Natural killer cell (primary cell): ENCODE measurements at regions of chr7 and their contacts with region 1.

Region 1: DNA sequence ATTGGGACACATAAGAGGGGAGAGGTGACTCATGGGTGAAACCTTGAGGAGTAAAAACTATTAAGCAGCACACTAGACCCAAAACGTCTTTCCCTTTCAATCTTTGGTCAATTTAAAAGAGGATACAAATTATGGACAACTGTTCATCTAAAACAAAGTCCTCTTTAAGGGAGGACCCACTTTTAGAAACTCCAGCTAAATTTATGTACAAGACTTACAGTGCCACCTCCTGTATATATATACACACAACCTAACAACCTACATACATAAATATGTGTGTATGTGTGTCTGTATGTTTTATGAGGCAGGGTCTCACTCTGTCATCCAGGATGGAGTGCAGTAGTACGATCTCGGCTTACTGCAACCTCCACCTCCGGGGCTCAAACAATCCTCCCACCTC is 18.1 kb upstream of the ZC3HAV1 start:
- DNase-seq: peak in 1 of 2 donors; percentile 48
- ATAC-seq: peak in 2 of 3 donors; percentile 55 to 61
- H3K4me3 ChIP-seq: no peak overlapping the region
- H3K4me3 Mint-ChIP-seq: no peak overlapping the region
- H3K27ac ChIP-seq: no peak overlapping the region
- H3K27ac Mint-ChIP-seq: no peak overlapping the region
- H3K4me1 ChIP-seq: peaks cover 6% of the 10 kb centered on the region
- H3K4me1 Mint-ChIP-seq: no peaks in the 10 kb centered on the region
- H3K27me3 ChIP-seq: no peaks in the 10 kb centered on the region
- H3K27me3 Mint-ChIP-seq: peaks cover 3 to 7% of the 10 kb centered on the region in 2 donors
- CTCF ChIP-seq: peak; percentile 58

Region 2: GRCh38 chr7:138785587-138786437 is 341.8 kb before region 1 on chr7:
- intact Hi-C with region 1: no loop called
- DNase-seq: no peak
- ATAC-seq: no peak
- H3K4me3 ChIP-seq: no peak overlapping the region
- H3K4me3 Mint-ChIP-seq: no peak overlapping the region
- H3K27ac ChIP-seq: no peak overlapping the region
- H3K27ac Mint-ChIP-seq: no peak overlapping the region
- H3K4me1 ChIP-seq: no peaks in the 10 kb centered on the region
- H3K4me1 Mint-ChIP-seq: no peaks in the 10 kb centered on the region
- H3K27me3 ChIP-seq: no peaks in the 10 kb centered on the region
- H3K27me3 Mint-ChIP-seq: peaks cover 9 to 11% of the 10 kb centered on the region in 2 donors
- CTCF ChIP-seq: no peak

Region 3: DNA sequence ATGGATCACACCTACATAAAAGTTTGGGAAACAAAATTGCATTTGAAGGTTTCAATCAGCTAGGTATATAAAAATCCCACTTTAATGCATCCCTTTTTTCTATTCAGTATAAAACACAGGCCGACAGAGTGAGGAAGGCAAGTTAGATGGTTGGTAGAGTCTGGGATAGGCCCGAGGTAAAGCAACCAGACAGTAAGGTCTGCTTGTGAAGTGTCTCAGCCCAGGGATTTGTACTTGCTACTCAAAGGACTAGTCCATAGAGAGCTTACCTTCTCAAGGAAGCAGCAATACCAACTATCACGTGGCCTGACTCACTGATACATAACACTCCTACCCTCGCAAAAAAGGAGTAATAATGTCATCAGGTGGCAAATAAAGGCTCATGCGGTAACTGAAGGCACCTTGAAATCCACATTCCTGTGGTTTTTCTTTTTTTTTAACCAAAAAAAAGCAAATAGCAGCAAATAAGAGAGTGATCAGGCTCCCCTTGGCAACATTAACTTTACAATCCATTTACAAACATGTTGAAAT is 273.5 kb before region 1 on chr7:
- intact Hi-C with region 1: no loop called
- DNase-seq: no peak
- ATAC-seq: no peak
- H3K4me3 ChIP-seq: no peak overlapping the region
- H3K4me3 Mint-ChIP-seq: no peak overlapping the region
- H3K27ac ChIP-seq: no peak overlapping the region
- H3K27ac Mint-ChIP-seq: no peak overlapping the region
- H3K4me1 ChIP-seq: no peaks in the 10 kb centered on the region
- H3K4me1 Mint-ChIP-seq: no peaks in the 10 kb centered on the region
- H3K27me3 ChIP-seq: no peaks in the 10 kb centered on the region
- H3K27me3 Mint-ChIP-seq: peaks cover 6 to 20% of the 10 kb centered on the region in 2 donors
- CTCF ChIP-seq: no peak

Region 4: DNA sequence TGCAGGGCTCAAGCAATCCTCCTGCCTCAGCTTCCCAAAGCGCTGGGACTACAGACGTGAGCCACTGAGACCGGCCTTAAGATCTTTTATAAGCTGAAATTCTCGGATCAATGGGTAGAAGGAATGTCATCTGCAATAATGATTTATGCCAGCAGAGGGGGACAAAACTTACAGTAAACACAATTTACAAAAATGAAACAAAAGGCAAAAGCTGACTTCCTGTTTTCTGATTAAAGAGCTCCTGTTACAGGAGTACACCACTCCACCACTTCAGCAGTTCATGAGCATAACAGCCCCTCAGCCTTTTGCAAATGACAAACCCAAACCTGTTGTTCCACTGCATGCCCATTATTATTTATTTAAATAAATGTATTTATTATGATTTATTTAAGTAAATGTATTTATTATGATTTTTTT is 241.1 kb before region 1 on chr7:
- intact Hi-C with region 1: loop called (anchors 5 kb)
- DNase-seq: peak in 1 of 2 donors; percentile 87
- ATAC-seq: peak; percentile 77 to 97 (median 87)
- H3K4me3 ChIP-seq: no peak overlapping the region
- H3K4me3 Mint-ChIP-seq: no peak overlapping the region
- H3K27ac ChIP-seq: peak overlapping the region; percentile 22
- H3K27ac Mint-ChIP-seq: peak overlapping the region; percentile 51 to 81
- H3K4me1 ChIP-seq: peaks cover 5% of the 10 kb centered on the region
- H3K4me1 Mint-ChIP-seq: peaks cover 5 to 6% of the 10 kb centered on the region in 2 donors
- H3K27me3 ChIP-seq: no peaks in the 10 kb centered on the region
- H3K27me3 Mint-ChIP-seq: peaks cover 0 to 15% of the 10 kb centered on the region in 2 donors
- CTCF ChIP-seq: peak; percentile 82

Region 5: DNA sequence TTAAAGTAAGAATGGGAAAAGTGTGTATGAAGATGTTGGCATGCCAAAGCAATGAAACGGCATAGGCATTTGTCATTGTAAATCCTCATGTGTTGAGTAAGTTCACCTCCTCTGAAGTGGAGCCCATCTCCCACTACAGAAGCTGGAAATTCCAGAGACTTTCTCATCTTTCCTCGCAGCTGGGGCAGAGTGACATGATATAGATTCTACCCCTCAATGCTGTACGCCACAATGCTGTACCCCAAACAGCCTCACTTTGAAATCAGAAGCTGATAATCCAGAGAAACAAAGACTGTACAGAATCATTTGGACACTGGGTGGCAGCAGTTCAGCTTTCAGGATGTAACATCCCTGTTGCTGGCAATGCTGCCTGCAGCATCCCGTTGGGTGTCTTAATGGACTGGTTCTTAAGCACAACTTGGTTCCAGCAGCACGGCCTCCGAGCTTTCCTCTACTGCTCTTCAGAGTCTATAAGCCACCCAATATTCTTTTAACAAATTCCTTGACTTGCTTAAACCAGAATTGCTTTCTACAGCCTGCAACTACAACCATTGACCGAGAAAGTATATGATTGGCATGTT is 110.6 kb before region 1 on chr7:
- intact Hi-C with region 1: loop called (anchors 1 kb)
- DNase-seq: peak; percentile 42 to 83
- ATAC-seq: peak; percentile 87 to 95 (median 94)
- H3K4me3 ChIP-seq: no peak overlapping the region
- H3K4me3 Mint-ChIP-seq: no peak overlapping the region
- H3K27ac ChIP-seq: no peak overlapping the region
- H3K27ac Mint-ChIP-seq: no peak overlapping the region
- H3K4me1 ChIP-seq: no peaks in the 10 kb centered on the region
- H3K4me1 Mint-ChIP-seq: peaks cover 0 to 5% of the 10 kb centered on the region in 2 donors
- H3K27me3 ChIP-seq: no peaks in the 10 kb centered on the region
- H3K27me3 Mint-ChIP-seq: peaks cover 0 to 11% of the 10 kb centered on the region in 2 donors
- CTCF ChIP-seq: peak; percentile 64